Breast epithelium (tissue), 4 donors: ENCODE measurements at regions of chr11 and their contacts with region 1.

Region 1: DNA sequence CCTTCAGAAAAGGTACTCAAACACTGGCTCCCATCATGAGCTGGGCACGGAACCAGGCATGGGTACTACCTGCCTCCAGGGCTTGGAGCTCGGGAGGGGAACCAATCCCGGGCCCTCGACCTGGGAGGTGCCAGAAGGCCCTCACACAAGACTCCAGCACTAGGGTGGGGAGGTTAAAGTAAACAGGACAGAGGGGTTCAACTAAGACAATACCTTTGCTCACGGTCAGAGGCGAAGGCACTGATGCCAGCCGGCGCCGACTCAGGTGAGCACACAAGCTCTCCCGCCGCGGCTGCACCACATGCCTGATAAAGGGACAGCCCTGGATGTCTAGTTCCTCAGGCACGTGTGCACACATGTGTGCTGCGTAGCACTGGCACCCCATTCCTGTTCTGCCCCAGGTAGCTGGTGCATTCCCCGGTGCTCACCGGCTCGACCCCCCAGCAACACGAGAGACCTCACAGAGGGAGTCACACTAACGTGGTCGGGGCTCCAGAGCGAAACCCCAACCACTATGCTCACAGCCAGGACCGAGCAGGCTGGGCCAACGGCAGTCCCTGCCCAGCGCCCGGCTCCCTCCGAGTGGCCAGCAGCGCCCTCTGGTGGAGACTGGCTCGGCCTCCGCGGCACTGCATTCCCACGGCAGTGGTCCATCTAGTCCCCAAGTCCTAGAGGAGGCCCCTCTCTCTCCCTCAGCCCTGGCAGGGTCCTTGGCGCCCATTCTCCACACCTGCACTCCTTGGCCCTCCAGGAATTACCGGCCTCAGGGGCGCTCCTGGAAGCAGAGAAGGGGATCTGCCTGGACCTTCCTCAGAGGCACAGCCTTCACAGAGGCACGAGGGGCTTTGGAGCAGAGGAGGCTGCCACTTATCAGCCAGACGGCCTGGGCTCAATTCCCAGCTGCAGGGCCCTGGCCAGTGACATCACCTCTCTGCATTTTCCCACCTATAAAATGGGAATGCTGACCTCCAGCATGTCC is 28.8 kb upstream of the MOB2 start:
- DNase-seq: peak; percentile 43 to 88
- H3K4me3 ChIP-seq: peak overlapping the region in 2 of 3 donors; percentile 18 to 53
- H3K27ac ChIP-seq: no peak overlapping the region
- H3K4me1 ChIP-seq: peaks cover 8 to 11% of the 10 kb centered on the region in 2 donors
- H3K27me3 ChIP-seq: no peaks in the 10 kb centered on the region
- CTCF ChIP-seq: peak; percentile 42 to 89 (median 88)
- POLR2A ChIP-seq: no peak

Region 2: DNA sequence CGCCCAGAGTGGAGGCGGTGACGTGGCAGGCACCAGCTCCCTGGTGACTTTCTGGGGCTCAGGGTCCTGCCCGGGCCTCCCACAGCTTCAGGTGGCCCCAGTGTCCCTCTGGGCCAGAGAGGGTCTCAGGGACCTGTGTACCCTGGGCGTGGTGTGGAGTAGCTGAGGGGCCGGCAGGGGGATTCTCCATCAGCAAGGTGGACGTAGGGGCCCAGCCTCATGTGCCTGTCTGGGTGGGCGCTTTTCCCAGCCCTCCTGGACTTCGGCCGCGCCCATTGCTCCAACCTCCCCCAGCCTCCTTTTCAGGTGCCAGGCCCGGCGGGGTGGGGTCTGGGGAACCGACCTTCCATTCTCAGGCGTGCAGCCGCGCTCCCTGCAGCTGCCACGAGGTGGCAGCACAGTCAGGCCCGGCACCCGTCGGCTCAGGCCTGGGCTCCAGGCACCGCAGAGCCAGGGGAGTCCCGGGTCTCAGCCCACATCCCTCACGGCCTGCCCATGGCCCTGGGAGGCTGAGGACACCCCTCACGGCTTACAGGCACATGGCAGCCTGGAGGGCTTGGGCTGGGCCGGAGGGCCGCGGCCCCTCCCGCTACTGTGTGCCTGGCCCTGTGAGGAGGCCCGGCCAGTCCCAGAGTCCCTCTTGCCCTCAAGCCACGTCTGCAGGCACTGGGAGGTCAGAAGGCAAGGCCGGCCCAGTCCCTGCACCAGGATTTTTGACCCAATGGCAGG is 312.4 kb before region 1 on chr11:
- intact Hi-C with region 1: loop called (anchors 10 kb)
- DNase-seq: peak in 1 of 2 donors; percentile 62
- H3K4me3 ChIP-seq: no peak overlapping the region
- H3K27ac ChIP-seq: no peak overlapping the region
- H3K4me1 ChIP-seq: no peaks in the 10 kb centered on the region
- H3K27me3 ChIP-seq: peaks cover 2 to 59% of the 10 kb centered on the region in 2 donors
- CTCF ChIP-seq: peak; percentile 61 to 87 (median 87)
- POLR2A ChIP-seq: no peak

Region 3: DNA sequence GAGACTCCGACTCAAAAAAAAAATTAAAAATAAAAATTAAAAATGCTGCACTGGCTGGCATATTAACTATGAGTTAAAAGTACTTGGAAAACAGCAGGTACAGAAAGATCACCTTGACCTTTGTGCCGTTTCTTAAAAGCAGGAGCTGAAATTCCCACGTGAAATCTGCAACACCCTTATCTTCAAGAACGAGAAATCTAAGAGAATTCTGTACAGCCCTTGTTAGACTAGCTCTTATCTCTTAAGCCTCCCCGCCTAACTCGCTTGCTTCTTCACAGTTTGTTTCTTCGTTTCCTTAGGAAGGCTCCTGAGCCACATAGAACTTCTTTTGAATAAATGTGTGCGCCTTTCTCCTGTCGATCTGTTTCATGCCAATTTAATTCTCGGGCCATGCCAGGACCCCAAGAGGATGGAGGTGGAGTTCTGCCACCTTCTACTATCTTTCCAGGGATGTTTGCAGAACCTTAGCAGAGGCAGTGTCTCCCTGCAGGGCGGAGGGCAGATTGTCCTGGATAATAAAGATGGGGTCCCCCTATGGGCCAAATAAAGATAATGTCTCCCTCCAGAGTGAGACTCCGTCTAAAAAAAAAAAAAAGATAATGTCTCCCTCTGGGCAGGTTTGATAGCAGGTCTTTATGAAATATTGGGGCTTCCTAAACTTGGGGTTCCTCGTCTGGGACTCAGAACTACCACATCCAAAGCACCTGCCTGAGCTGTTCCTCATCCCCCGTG is 292.1 kb after region 1 on chr11:
- intact Hi-C with region 1: no loop called
- DNase-seq: no peak
- H3K4me3 ChIP-seq: no peak overlapping the region
- H3K27ac ChIP-seq: no peak overlapping the region
- H3K4me1 ChIP-seq: no peaks in the 10 kb centered on the region
- H3K27me3 ChIP-seq: no peaks in the 10 kb centered on the region
- CTCF ChIP-seq: no peak
- POLR2A ChIP-seq: no peak